IMR-90 (cell line): ENCODE measurements at regions of chr1 and their contacts with region 1.

Region 1: DNA sequence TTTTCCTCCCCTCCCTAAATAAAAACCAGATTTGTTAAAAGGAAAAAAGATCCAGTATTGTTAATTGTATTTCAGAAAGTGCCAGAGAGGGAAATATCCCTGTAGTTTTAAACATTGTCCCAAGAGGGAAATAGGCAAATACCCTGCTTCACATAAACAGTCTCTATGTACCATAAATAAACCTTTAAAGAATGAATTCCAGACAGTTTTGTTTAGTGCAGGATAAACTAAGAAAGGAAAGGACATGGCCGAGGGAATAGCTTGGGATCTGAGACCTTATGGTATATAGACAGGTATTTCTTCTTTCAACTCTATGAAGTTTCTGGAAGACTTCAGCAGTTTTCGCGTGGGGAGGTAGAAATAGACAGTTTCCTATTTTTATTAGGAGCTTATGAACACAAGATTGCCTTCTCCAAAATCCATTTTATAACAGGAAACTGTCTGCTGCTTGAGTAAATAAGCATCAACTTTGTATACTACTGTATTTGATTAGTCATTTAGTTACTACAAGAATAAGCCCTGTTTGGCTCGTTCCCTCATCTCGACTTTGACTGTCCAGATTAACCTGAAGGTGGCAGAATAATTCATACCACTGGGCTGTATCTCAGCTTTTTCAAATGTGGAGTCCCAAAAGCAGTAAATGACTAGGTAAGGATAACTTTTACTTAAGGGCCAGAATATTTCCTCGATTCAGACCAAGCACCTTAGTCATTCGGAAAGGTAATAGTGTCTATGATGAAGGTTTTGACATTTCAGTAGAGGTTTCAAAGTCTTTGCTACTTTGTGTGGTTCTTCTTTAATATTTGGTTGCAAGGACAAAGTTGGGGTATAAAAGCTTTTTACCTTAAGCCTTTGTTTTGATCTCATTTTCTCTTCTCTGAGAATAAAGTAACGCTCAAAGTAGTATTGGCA is 177.5 kb downstream of the VPS13D start:
- DNase-seq: peak; percentile 84
- ATAC-seq: peak; percentile 86
- H3K4me3 ChIP-seq: no peak overlapping the region
- H3K27ac ChIP-seq: peak overlapping the region; percentile 61; the same call in 1 of the 2 replicates
- H3K4me1 ChIP-seq: peaks cover 22% of the 10 kb centered on the region
- H3K27me3 ChIP-seq: no peaks in the 10 kb centered on the region
- CTCF ChIP-seq: peak; percentile 51
- POLR2A ChIP-seq: no peak
- RAD21 ChIP-seq: peak; percentile 66

Region 2: DNA sequence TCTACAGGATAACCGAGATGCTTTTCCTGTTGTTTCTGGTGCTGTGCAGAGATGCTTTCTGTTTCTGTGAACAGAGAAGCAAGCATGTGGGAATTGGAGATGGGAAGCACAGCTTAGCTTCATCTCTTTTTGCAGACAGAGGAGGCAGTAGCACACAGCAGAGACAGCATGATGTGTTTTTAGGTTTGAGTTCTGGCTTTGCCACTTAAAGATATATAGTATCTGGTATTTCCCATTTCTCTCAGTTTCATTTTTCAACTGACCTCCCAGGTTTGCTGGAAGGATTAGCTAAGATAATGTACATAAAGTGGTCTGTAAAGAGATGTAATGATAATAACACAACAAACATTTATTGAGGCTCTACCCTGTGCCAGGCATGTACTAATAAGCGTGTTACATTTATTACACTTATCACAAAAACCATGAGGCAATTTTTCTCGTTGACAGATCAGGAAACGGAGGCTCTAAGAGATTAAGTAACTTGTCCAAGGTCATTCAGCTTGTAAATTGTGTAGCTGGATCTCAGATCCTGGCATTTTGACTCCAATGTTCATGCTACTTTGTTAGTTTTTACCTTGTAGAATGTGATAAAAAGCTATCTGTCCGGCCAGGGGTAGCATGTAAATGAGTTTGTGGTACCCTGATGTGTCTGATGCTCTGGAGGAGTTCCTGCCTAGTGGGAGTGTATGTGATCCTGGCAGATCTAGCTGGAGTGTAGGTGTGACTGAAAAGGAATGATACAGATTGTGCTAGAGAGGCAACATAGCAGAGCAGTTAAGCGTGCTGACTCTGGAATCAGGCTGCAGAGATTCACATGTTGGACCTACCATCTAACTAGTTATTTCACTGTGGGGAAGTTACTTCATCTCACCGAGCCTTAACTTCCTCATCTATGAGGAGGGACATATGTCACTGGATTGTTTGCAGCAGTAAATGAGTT is 30.9 kb before region 1 on chr1:
- CTCF ChIA-PET with region 1: no interaction called
- POLR2A ChIA-PET with region 1: no interaction called
- dilution Hi-C with region 1: no loop called
- in situ Hi-C with region 1: no loop called
- intact Hi-C with region 1: no loop called
- DNase-seq: no peak
- ATAC-seq: no peak
- H3K4me3 ChIP-seq: no peak overlapping the region
- H3K27ac ChIP-seq: no peak overlapping the region
- H3K4me1 ChIP-seq: peaks cover 2% of the 10 kb centered on the region; the same call in 1 of the 2 replicates
- H3K27me3 ChIP-seq: no peaks in the 10 kb centered on the region
- CTCF ChIP-seq: no peak
- POLR2A ChIP-seq: no peak
- RAD21 ChIP-seq: no peak

Region 3: DNA sequence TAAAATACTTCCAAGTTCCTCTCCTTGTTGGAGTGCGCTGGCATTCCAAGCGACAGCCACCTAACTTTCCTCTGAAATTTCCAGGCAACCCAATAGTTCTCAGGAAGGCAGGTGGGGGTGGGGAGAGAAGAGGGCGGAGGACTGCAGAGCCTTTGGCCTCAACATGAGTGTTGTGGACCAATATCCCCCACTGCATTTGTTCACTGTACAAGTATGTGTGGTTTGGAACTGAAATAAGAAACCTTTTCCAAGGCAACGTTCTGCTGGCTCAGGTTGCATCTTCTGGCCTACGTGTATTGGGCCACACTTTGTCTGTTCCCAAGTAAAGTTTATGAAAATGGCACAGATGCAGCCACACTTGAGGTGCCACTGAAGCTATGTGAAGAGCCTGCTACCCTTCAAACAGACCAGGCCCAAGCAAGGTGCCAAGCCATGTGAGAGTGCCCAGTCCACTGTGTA is 57.3 kb after region 1 on chr1:
- CTCF ChIA-PET with region 1: interaction called, 3 read pairs
- POLR2A ChIA-PET with region 1: no interaction called
- dilution Hi-C with region 1: no loop called
- in situ Hi-C with region 1: no loop called
- intact Hi-C with region 1: loop called (anchors 5 kb)
- DNase-seq: peak; percentile 97
- ATAC-seq: peak; percentile 88
- H3K4me3 ChIP-seq: no peak overlapping the region
- H3K27ac ChIP-seq: peak overlapping the region; percentile 96
- H3K4me1 ChIP-seq: peaks cover 34% of the 10 kb centered on the region
- H3K27me3 ChIP-seq: no peaks in the 10 kb centered on the region
- CTCF ChIP-seq: no peak
- POLR2A ChIP-seq: no peak
- RAD21 ChIP-seq: no peak